ENCODE measurements at regions of chr3 and their contacts with region 1.

Region 1: DNA sequence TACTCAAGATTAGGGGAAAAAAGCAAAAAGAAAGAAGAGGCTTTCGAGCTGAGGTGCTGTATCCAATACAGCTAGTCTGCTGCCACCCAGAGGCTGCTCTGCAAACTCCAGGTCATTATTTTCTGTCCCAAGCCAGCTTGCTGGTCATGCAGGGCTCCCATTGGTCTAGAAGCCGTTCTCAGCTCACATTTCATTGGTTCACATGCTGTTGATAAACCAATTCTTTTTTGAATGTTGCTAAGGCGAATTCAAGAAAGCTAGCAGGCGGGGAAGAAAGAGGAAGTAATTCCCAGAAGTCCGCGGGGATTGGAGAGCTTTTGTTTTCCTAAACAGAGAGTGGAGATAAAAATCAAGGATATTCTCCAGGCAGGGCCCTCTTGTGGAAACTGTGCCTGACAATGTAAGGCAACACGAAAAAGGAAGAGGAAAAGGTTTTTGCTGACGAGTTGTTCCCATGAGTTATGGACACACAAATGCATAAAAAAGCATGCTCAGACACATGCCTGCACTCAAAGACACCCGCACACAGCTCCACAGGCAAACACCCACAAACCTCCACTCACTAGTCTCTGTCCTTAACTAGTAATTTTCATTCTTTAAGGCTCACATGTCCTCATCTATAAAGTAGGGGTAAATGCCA is 33.4 kb downstream of the FSTL1 start:
- DNase-seq: peak; percentile 93
- H3K4me3 Mint-ChIP-seq: peak overlapping the region; percentile 74
- H3K27ac Mint-ChIP-seq: no peak overlapping the region
- H3K4me1 Mint-ChIP-seq: peaks cover 12% of the 10 kb centered on the region
- H3K27me3 Mint-ChIP-seq: no peaks in the 10 kb centered on the region

Region 2: DNA sequence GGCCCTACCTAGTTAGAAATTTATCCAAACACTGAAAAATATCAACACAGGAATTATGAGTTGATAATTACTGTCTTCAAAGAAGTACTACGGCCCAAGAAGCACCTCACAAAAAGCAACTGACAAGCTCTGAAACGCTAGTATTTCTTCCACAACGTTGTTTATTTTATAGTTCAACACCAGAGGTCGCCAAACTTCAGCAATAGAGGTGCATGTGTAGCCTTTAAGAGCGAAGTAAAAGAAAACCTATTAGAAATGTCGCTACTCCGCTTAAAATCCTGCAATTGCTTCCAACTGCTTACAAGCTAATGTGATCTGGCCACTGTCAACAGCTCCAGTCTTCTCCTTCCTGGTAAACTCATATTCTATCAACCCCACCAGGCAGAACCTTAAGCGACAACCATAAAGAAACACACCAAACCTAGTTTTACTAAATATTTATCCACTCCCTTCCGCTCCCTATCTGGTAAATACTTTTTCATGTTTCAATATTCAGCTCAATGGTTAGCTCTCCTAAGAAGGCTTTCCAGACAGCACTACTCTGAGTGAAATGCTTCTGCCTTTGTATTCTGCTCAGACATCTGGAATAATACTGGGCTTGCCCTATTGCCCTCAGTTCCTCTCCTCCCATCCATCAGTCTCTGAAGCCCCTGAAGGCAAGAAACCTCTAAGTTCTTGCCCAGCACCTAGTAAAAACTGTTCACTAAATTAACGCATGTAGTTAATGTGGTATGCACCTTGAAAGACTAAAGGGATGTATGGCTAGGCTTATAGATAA is 525.3 kb before region 1 on chr3:
- CTCF ChIA-PET with region 1: interaction called, 33 read pairs
- POLR2A ChIA-PET with region 1: no interaction called
- intact Hi-C with region 1: loop called (anchors 1 kb)
- DNase-seq: peak; percentile 35
- H3K4me3 Mint-ChIP-seq: no peak overlapping the region
- H3K27ac Mint-ChIP-seq: no peak overlapping the region
- H3K4me1 Mint-ChIP-seq: peaks cover 13% of the 10 kb centered on the region
- H3K27me3 Mint-ChIP-seq: no peaks in the 10 kb centered on the region

Region 3: DNA sequence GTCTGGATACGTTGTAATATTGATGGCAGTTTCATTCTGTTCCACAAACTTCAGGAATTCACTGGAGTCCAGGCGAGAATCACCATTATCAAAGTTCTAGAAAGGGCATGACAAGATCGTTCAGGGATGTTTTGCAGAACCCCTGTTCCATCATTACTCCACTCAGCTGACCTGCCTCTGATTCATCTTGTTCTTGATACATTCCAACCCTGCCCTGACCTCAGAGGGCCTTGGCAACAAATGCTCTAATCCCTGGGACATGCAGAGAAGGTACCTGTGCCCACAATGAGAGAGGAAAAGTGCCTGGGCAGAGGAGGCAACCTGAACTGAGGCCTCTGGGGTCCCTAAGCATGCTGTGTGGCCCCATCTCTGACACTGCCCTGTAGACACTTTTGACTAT is 12.5 kb before region 1 on chr3:
- CTCF ChIA-PET with region 1: interaction called, 27 read pairs
- POLR2A ChIA-PET with region 1: no interaction called
- intact Hi-C with region 1: no loop called
- DNase-seq: no peak
- H3K4me3 Mint-ChIP-seq: no peak overlapping the region
- H3K27ac Mint-ChIP-seq: no peak overlapping the region
- H3K4me1 Mint-ChIP-seq: no peaks in the 10 kb centered on the region
- H3K27me3 Mint-ChIP-seq: no peaks in the 10 kb centered on the region

Region 4: DNA sequence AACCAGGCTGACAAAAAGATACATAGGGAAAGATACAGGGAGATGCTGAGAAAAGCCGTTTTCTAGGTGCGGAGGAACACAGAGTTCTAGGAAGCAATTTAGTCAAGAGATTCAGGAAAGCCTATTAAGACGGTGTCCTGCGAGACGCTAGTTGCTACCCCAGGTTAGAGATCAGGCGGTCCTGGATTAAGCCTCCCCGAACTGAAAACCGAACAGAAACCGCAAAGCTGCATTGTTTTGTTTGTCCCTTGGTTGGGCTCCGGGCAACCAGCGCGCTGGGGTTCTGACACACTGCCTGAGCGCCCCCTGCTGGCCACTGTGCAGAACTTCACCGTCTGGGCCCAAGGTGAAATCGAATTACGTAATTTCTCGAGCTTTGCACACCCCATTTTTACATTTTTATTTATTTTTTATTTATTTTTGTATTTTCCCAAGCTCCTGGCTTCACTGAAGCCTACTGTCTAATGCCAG is 141.4 kb after region 1 on chr3:
- CTCF ChIA-PET with region 1: interaction called, 75 read pairs
- POLR2A ChIA-PET with region 1: interaction called, 3 read pairs
- intact Hi-C with region 1: loop called (anchors 1 kb)
- DNase-seq: peak; percentile 90
- H3K4me3 Mint-ChIP-seq: peak overlapping the region; percentile 73
- H3K27ac Mint-ChIP-seq: peak overlapping the region; percentile 30
- H3K4me1 Mint-ChIP-seq: peaks cover 15% of the 10 kb centered on the region
- H3K27me3 Mint-ChIP-seq: peaks cover 2% of the 10 kb centered on the region

Region 5: GRCh38 chr3:120795017-120795648 is 377.7 kb after region 1 on chr3:
- CTCF ChIA-PET with region 1: interaction called, 10 read pairs
- POLR2A ChIA-PET with region 1: no interaction called
- intact Hi-C with region 1: loop called (anchors 1 kb)
- DNase-seq: peak; percentile 87
- H3K4me3 Mint-ChIP-seq: no peak overlapping the region
- H3K27ac Mint-ChIP-seq: no peak overlapping the region
- H3K4me1 Mint-ChIP-seq: peaks cover 6% of the 10 kb centered on the region
- H3K27me3 Mint-ChIP-seq: no peaks in the 10 kb centered on the region